ENCODE measurements at regions of chr3 and their contacts with region 1.

Region 1: GRCh38 chr3:55198543-55198942 is 270.7 kb upstream of the LRTM1 start:
- DNase-seq: peak; percentile 99
- ATAC-seq: peak; percentile 93
- H3K4me3 ChIP-seq: no peak overlapping the region
- H3K27ac ChIP-seq: peak overlapping the region; percentile 89
- H3K4me1 ChIP-seq: peaks cover 21% of the 10 kb centered on the region
- H3K27me3 ChIP-seq: no peaks in the 10 kb centered on the region
- CTCF ChIP-seq: 0 out of 2 replicates have a peak, but pooled peaks have one; percentile 16
- POLR2A ChIP-seq: no peak
- RAD21 ChIP-seq: peak; percentile 41; the same call in 1 of the 2 replicates

Region 2: DNA sequence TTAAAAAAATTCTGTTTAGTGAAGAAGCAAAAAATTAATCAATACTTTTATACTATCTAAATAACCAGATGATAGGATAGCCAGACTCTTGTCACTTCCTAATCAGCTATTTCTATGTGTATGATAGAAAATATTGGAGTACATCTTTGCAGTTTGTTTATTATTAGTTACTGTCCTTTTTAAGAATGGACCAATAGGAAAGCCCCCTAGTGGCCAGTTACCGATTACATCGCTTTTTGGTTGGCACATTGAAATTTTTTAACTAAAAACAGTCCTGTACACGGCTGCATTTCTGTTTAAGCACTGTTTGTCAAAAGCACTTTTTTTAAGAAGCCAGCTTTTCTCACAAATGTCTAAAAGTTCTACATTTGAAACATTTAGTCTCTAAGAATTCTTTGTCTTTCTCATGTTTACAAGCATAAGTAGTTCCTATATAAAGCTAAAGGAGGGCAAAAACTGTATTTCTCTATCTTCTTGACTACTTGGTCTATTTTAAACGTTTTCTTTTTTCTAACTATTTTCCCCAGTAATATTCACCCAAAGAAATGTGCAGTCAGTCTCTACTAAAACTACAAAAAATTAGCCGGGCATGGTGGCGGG is 17.5 kb before region 1 on chr3:
- CTCF ChIA-PET with region 1: no interaction called
- POLR2A ChIA-PET with region 1: interaction called, 11 read pairs
- dilution Hi-C with region 1: no loop called
- in situ Hi-C with region 1: no loop called
- intact Hi-C with region 1: no loop called
- DNase-seq: no peak
- ATAC-seq: no peak
- H3K4me3 ChIP-seq: no peak overlapping the region
- H3K27ac ChIP-seq: no peak overlapping the region
- H3K4me1 ChIP-seq: peaks cover 8% of the 10 kb centered on the region
- H3K27me3 ChIP-seq: no peaks in the 10 kb centered on the region
- CTCF ChIP-seq: peak; percentile 46
- POLR2A ChIP-seq: no peak
- RAD21 ChIP-seq: peak; percentile 24; the same call in 1 of the 2 replicates

Region 3: DNA sequence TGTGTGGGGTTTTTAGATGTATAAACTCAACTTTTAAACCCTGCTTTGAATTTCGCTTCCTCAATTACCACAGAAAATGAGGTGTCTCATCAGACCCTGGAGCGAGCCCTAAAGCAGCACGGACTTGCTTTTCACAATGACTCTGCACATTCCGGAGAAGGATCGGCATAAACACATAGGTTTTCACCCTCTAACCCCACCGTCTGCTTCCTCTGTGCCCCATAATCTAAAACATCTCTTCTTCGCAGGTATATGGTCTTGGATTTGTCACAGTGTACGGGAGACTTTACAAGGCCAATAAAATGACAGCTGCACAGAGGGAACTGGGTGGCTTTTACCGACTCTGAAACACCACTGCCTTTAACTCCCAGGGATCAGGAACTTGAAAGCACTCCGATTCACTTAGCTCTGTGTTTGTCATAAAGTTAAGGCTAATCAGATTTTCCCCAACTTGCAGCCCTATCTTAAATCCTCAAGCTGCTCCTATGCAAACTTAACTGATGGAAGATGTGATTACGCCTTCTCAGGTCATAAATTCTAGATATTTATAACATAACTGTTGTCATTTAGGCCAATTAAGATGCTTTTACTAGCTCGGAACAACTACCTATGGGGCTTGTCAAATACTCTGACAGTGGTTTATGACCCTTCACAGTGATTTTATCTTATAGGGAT is 421.9 kb after region 1 on chr3:
- CTCF ChIA-PET with region 1: no interaction called
- POLR2A ChIA-PET with region 1: no interaction called
- dilution Hi-C with region 1: no loop called
- in situ Hi-C with region 1: no loop called
- intact Hi-C with region 1: loop called (anchors 10 kb)
- DNase-seq: peak; percentile 87
- ATAC-seq: peak; percentile 49
- H3K4me3 ChIP-seq: no peak overlapping the region
- H3K27ac ChIP-seq: peak overlapping the region; percentile 80
- H3K4me1 ChIP-seq: peaks cover 15% of the 10 kb centered on the region
- H3K27me3 ChIP-seq: no peaks in the 10 kb centered on the region
- CTCF ChIP-seq: no peak
- POLR2A ChIP-seq: no peak
- RAD21 ChIP-seq: no peak

Region 4: GRCh38 chr3:55828712-55829111 is 630.2 kb after region 1 on chr3:
- CTCF ChIA-PET with region 1: no interaction called
- POLR2A ChIA-PET with region 1: no interaction called
- dilution Hi-C with region 1: no loop called
- in situ Hi-C with region 1: no loop called
- intact Hi-C with region 1: no loop called
- DNase-seq: peak; percentile 46
- ATAC-seq: peak; percentile 40
- H3K4me3 ChIP-seq: no peak overlapping the region
- H3K27ac ChIP-seq: no peak overlapping the region
- H3K4me1 ChIP-seq: peaks cover 3% of the 10 kb centered on the region
- H3K27me3 ChIP-seq: no peaks in the 10 kb centered on the region; the same call in 1 of the 2 replicates
- CTCF ChIP-seq: no peak
- POLR2A ChIP-seq: no peak
- RAD21 ChIP-seq: no peak